Psoas muscle (tissue), 8 donors: ENCODE measurements at regions of chr16 and their contacts with region 1.

Region 1: DNA sequence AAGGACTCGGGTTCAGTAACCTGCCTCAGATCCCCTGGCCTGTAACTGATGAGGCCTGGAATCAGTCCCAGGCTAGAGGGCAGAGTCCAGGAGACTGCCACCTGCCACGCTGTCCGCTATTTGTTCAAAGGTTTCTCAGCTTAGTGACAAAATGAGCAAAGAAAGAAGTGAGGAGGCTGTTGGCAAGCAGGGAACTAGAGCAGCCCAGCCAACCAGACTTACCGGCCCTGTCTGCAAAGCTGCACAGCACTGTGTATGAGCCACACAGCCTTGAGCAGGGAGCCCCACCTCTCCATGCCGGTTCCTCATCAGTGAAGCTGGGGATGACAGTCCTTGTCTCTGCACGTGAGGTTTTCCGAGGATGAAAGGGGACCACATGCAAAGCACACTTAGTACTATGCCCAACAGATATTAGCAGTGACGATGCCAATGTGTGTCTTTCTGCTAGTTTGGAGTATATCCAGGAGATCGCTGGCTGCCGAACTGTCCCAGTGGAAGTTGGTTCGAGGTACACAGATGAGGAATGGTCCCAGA is 11.2 kb downstream of the KDM8 start:
- DNase-seq: peak in 1 of 2 donors; percentile 26
- ATAC-seq: peak; percentile 52 to 93 (median 66)
- H3K4me3 ChIP-seq: no peak overlapping the region
- H3K27ac ChIP-seq: peak overlapping the region; percentile 12
- H3K4me1 ChIP-seq: peaks cover 14% of the 10 kb centered on the region
- H3K27me3 ChIP-seq: no peaks in the 10 kb centered on the region
- CTCF ChIP-seq: no peak

Region 2: DNA sequence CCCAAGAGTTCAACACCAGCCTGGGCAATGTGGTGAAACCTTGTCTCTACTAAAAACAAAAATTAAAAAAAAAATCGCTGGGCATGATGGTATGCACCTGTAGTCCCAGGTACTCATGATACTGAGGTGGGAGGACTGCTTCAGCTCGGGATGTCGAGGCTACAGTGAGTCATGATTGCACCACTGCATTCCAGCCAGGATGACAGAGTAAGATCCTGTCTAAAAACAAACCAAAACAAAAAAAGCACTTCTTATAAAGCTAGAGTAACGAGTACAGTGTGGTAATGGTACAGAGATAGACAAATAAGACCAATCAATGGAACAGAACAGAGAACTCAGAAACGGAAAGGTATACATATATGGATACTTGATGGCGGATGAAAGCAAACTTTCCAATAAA is 49.7 kb after region 1 on chr16:
- intact Hi-C with region 1: loop called in 1 of 2 experiments (anchors 5 kb)
- DNase-seq: no peak
- ATAC-seq: no peak
- H3K4me3 ChIP-seq: no peak overlapping the region
- H3K27ac ChIP-seq: no peak overlapping the region
- H3K4me1 ChIP-seq: peaks cover 10% of the 10 kb centered on the region
- H3K27me3 ChIP-seq: no peaks in the 10 kb centered on the region
- CTCF ChIP-seq: no peak

Region 3: DNA sequence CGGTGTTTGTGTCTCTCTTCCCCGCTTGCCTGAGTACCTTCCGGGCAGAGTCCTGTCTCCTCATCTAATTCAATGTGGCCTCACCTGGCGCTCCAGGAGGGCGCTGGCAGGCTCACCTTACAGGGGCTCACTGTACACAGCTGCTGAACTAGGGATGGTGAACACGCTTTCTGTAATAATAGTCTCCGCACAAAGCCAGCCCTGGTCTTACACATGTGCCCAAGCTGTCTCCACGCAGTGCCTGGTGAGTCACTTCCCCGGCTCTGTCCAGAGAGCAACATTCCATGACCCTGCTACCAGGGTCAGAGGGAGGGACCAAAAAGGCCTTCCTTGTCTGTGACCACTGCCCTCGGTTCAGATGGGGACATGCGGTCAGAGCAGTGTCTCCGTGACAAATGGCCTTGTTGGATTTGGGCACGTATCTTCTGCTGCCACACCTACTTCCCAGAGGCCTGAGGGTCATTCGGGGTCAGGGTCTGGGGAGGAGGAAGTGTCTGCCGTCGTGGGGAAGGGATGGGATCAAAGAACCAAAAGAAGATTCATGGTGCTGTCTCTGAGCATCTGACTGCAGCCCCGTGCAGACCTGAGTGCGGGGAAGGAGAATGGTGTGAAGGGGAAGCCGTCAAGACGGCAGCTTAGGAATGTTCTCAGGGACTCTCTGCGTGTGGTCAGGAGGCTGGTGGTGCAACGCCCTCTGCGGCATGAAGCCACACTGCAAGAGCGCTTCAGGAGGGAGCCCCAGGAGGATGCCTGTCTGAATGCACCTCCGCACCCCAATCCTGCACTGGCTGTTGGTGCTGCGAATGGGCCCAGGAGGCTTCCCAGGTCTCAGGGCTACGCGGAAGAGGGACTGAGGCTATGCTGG is 256.3 kb after region 1 on chr16:
- intact Hi-C with region 1: no loop called
- DNase-seq: peak; percentile 64 to 76
- ATAC-seq: peak; percentile 65 to 90 (median 82)
- H3K4me3 ChIP-seq: no peak overlapping the region
- H3K27ac ChIP-seq: no peak overlapping the region
- H3K4me1 ChIP-seq: peaks cover 4% of the 10 kb centered on the region
- H3K27me3 ChIP-seq: no peaks in the 10 kb centered on the region
- CTCF ChIP-seq: no peak